Mammary epithelial cell (primary cell): ENCODE measurements at regions of chr4 and their contacts with region 1.

Region 1: GRCh38 chr4:74152836-74153235 is 5.1 kb upstream of the MTHFD2L start:
- DNase-seq: no peak
- H3K4me3 ChIP-seq: no peak overlapping the region
- H3K27ac ChIP-seq: no peak overlapping the region
- H3K4me1 ChIP-seq: peaks cover 13% of the 10 kb centered on the region
- H3K27me3 ChIP-seq: no peaks in the 10 kb centered on the region
- CTCF ChIP-seq: no peak

Region 2: DNA sequence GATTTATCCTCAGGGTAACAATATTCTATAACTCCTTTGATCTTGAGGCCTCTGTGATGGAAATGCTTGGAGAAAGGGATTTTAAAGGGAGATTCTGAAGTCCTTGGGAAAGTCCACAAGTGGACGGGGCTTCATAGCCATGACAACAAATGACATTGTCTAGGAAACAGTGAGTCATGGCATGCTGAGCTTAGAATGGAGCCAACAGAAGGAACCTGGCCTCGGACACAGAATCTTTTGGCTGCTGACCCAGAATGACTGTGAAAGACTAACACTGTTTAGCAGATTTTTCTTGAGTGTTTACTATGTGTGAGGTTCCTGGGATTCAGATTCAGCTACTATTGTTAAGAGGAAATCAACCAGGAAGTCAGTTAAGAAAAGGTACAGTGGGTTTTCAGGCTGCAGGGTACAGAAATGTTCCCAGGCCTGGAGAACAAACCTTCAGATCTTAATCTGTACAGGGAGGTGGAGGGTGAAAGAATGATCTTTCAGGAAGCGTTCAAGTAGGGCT is 35.8 kb before region 1 on chr4:
- CTCF ChIA-PET with region 1: no interaction called
- dilution Hi-C with region 1: loop called (anchors 5 kb)
- in situ Hi-C with region 1: no loop called
- intact Hi-C with region 1: no loop called
- DNase-seq: peak; percentile 95
- H3K4me3 ChIP-seq: peak overlapping the region in 2 of 3 experiments; percentile 27 to 63
- H3K27ac ChIP-seq: peak overlapping the region; percentile 99
- H3K4me1 ChIP-seq: peaks cover 43% of the 10 kb centered on the region
- H3K27me3 ChIP-seq: no peaks in the 10 kb centered on the region
- CTCF ChIP-seq: no peak